ENCODE measurements at regions of chr7 and their contacts with region 1.

Region 1: GRCh38 chr7:33757562-33758165 is 147.7 kb upstream of the BMPER start:
- DNase-seq: peak; percentile 80
- H3K4me3 ChIP-seq: no peak overlapping the region
- H3K27ac ChIP-seq: no peak overlapping the region
- H3K4me1 ChIP-seq: no peaks in the 10 kb centered on the region
- H3K27me3 ChIP-seq: no peaks in the 10 kb centered on the region
- CTCF ChIP-seq: peak; percentile 61 to 92 (median 72)
- POLR2A ChIP-seq: no peak

Region 2: DNA sequence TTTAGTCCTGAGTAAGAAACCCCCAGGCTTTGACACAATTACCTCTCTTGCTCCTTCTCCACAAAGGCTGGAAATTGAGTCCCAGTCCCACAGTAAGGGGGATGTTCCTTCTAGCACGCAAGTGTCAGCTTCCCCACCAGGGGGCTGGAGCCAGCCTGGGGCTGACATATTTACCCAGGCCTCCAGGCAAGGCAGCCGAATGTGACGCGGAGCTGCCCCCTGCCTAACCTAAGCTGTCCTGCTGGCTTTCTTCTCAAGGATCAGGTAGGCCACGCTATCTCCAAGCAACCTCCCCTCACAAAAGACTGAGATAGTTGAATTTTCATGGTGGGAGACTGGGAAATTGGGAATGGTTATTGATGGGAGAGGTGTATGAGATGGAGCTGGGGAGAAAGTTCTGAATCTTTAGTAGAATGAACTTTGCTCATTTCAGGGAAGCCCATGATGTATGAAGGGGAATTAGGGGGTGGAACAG is 128.5 kb after region 1 on chr7:
- intact Hi-C with region 1: loop called (anchors 10 kb)
- DNase-seq: no peak
- H3K4me3 ChIP-seq: no peak overlapping the region
- H3K27ac ChIP-seq: no peak overlapping the region
- H3K4me1 ChIP-seq: no peaks in the 10 kb centered on the region
- H3K27me3 ChIP-seq: no peaks in the 10 kb centered on the region
- CTCF ChIP-seq: no peak
- POLR2A ChIP-seq: no peak

Region 3: GRCh38 chr7:33932832-33933468 is 175.3 kb after region 1 on chr7:
- intact Hi-C with region 1: loop called (anchors 10 kb)
- DNase-seq: peak; percentile 90
- H3K4me3 ChIP-seq: no peak overlapping the region
- H3K27ac ChIP-seq: no peak overlapping the region
- H3K4me1 ChIP-seq: no peaks in the 10 kb centered on the region
- H3K27me3 ChIP-seq: no peaks in the 10 kb centered on the region
- CTCF ChIP-seq: peak; percentile 85 to 95 (median 94)
- POLR2A ChIP-seq: no peak